ENCODE measurements at regions of chr5 and their contacts with region 1.

Region 1: GRCh38 chr5:75536147-75537025 is 24.7 kb downstream of the POLK start:
- DNase-seq: no peak
- H3K4me3 ChIP-seq: no peak overlapping the region
- H3K27ac ChIP-seq: no peak overlapping the region
- H3K4me1 ChIP-seq: no peaks in the 10 kb centered on the region
- H3K27me3 ChIP-seq: no peaks in the 10 kb centered on the region
- CTCF ChIP-seq: no peak

Region 2: GRCh38 chr5:73673161-73673591 is 1863.2 kb before region 1 on chr5:
- CTCF ChIA-PET with region 1: no interaction called
- POLR2A ChIA-PET with region 1: interaction called, 11 read pairs
- intact Hi-C with region 1: no loop called
- DNase-seq: peak in 1 of 2 experiments; percentile 85
- H3K4me3 ChIP-seq: 0 out of 2 replicates have a peak overlapping the region, but pooled peaks have one; percentile 1
- H3K27ac ChIP-seq: peak overlapping the region; percentile 91
- H3K4me1 ChIP-seq: peaks cover 39% of the 10 kb centered on the region
- H3K27me3 ChIP-seq: no peaks in the 10 kb centered on the region
- CTCF ChIP-seq: no peak

Region 3: DNA sequence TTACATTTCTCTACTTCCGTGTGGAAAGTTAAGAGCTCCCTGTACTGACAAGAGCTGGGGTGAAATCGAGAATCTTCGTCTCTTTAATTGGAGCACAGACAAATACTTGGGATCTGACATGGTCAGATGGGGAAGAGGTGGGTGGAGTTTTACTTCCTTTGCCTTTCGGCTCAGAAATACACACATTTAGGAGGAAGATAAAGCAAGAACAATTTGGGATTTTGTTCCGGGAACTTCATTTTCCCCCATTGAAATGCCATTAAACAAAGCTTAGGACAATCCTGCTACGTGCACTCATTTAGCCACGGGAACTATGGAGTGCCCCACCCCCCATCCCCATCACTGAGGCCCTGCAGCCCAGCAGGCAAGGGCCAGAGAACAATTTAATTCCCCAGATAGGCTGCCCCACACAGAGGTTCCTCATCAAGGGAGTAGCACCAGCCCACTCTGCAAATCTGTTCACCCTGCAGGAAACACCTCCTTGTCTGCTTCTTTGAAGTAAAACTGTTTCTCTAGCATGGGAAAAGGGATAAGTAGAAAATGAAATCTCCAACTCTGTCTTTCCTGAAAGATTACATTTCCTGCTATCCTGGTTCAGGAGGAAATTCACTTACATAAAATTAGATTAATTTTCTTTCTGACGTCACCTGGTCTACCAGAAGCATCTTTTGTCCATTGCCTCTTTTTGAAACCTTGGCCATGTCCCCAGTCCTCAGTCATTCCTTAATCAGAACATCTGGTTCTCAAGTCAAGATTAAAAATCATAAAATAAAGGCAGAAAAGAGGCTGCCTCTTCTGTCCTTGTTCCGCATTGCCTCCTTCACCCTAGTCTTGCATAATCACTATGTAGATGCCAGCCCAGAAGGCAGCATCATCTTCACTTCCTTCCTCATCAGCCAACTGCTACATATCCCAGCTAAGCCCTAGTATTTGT is 1102.2 kb before region 1 on chr5:
- CTCF ChIA-PET with region 1: no interaction called
- POLR2A ChIA-PET with region 1: no interaction called
- intact Hi-C with region 1: no loop called
- DNase-seq: no peak
- H3K4me3 ChIP-seq: no peak overlapping the region
- H3K27ac ChIP-seq: no peak overlapping the region
- H3K4me1 ChIP-seq: no peaks in the 10 kb centered on the region
- H3K27me3 ChIP-seq: no peaks in the 10 kb centered on the region
- CTCF ChIP-seq: no peak

Region 4: GRCh38 chr5:75603371-75603770 is 67.0 kb after region 1 on chr5:
- CTCF ChIA-PET with region 1: no interaction called
- POLR2A ChIA-PET with region 1: no interaction called
- intact Hi-C with region 1: no loop called
- DNase-seq: no peak
- H3K4me3 ChIP-seq: no peak overlapping the region
- H3K27ac ChIP-seq: no peak overlapping the region
- H3K4me1 ChIP-seq: peaks cover 19% of the 10 kb centered on the region
- H3K27me3 ChIP-seq: no peaks in the 10 kb centered on the region
- CTCF ChIP-seq: no peak